Sigmoid colon (tissue), 7 donors: ENCODE measurements at regions of chr19 and their contacts with region 1.

Region 1: DNA sequence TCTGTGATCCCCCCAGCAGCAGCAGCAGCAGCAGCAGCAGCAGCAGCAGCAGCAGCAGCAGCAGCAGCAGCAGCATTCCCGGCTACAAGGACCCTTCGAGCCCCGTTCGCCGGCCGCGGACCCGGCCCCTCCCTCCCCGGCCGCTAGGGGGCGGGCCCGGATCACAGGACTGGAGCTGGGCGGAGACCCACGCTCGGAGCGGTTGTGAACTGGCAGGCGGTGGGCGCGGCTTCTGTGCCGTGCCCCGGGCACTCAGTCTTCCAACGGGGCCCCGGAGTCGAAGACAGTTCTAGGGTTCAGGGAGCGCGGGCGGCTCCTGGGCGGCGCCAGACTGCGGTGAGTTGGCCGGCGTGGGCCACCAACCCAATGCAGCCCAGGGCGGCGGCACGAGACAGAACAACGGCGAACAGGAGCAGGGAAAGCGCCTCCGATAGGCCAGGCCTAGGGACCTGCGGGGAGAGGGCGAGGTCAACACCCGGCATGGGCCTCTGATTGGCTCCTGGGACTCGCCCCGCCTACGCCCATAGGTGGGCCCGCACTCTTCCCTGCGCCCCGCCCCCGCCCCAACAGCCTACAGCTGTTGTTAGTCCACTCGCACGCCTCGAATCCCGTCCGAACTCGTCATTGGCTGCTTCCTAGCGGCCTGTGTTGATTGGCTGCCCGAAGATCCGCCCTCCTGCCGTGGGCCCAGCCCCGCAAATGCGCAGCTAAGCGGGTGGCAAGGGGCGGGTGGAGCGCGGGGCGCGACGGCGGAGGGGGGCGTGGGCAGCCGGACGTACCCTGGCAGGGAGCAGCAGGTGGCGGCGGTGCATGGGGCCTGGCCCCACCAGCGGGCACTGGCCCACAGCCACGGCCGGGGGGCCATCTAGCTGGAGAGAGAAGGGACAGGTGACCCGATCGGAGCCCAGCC is 1.4 kb upstream of the SIX5 start:
- DNase-seq: peak; percentile 99
- H3K4me3 ChIP-seq: peak overlapping the region; percentile 47 to 93 (median 84)
- H3K27ac ChIP-seq: peak overlapping the region; percentile 89 to 99 (median 98)
- H3K4me1 ChIP-seq: peaks cover 3 to 47% (median 33%) of the 10 kb centered on the region in 4 donors
- H3K27me3 ChIP-seq: no peaks in the 10 kb centered on the region
- CTCF ChIP-seq: peak; percentile 85 to 94 (median 94)
- EP300 ChIP-seq: no peak
- POLR2A ChIP-seq: peak; percentile 27 to 43

Region 2: GRCh38 chr19:45638930-45639729 is 131.3 kb before region 1 on chr19 and contains the start of gene EML2:
- intact Hi-C with region 1: no loop called
- DNase-seq: no peak
- H3K4me3 ChIP-seq: peak within 1 kb of the TSS; percentile 55 to 71 (median 60)
- H3K27ac ChIP-seq: peak within 1 kb of the TSS in 1 of 4 donors; percentile 30
- H3K4me1 ChIP-seq: peaks cover 0 to 46% (median 30%) of the 10 kb centered on the region in 4 donors
- H3K27me3 ChIP-seq: peaks cover 6 to 11% (median 7%) of the 10 kb centered on the region in 3 donors
- CTCF ChIP-seq: no peak
- EP300 ChIP-seq: no peak
- POLR2A ChIP-seq: no peak
- total RNA-seq, gene EML2: 10.4 to 34.6 (median 14.7) TPM

Region 3: GRCh38 chr19:45717166-45717982 is 53.1 kb before region 1 on chr19:
- intact Hi-C with region 1: loop called (anchors 2 kb)
- DNase-seq: peak; percentile 100
- H3K4me3 ChIP-seq: peak overlapping the region; percentile 60 to 82 (median 69)
- H3K27ac ChIP-seq: peak overlapping the region; percentile 87 to 95 (median 88)
- H3K4me1 ChIP-seq: peaks cover 0 to 19% (median 17%) of the 10 kb centered on the region in 4 donors
- H3K27me3 ChIP-seq: no peaks in the 10 kb centered on the region
- CTCF ChIP-seq: peak in 1 of 4 experiments; percentile 29
- EP300 ChIP-seq: peak in 1 of 4 donors; percentile 79
- POLR2A ChIP-seq: peak; percentile 32 to 37

Region 4: DNA sequence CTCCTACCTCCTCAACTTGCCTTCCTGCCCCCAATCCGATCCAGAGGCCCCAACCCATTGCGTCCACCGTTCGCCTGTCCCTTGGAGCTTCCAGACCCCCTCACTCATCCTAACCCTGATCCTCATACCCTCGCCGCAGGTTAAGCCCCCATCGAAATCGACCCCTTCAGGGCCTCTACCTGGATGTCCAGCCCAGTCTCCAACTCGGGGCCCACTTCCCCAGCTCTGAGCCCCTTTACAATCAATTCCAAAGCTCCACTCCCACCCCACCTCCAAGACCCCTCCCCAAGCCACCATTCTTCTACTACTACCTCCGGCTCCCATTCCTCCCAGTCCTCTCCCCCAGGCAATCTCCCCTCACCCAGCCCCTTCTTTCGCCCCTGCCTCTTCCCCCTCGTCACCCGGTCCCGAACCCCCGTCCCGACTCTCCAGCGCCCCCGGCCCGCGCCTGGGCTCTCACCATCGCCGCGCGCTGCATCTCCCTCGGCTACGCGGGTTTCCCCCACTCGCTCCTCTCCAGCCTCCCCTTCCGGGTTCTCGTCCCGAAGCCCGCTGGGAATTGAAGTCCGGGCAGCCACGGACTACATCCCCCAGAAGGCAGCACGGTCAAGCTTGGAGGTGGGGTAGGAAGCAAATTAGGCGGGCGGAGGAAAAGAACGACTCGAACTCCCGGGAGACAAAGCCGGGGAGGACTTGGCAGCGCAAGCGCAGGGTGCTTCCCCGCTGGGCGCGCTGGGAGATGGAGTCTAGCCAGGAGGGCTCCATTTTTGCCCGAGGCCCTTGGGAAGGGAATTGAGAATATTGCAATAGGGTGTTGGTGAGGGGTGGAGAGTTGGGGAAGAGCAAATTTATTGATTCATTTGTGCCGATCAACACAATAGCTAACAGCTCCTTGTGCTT is 39.8 kb before region 1 on chr19 and contains the start of gene FBXO46:
- intact Hi-C with region 1: loop called (anchors 2 kb)
- DNase-seq: peak; percentile 99
- H3K4me3 ChIP-seq: peak within 1 kb of the TSS; percentile 87 to 91 (median 88)
- H3K27ac ChIP-seq: peak within 1 kb of the TSS; percentile 76 to 87 (median 84)
- H3K4me1 ChIP-seq: peaks cover 0 to 25% (median 20%) of the 10 kb centered on the region in 4 donors
- H3K27me3 ChIP-seq: no peaks in the 10 kb centered on the region
- CTCF ChIP-seq: no peak
- EP300 ChIP-seq: peak in 1 of 4 donors; percentile 51
- POLR2A ChIP-seq: peak; percentile 75 to 86
- total RNA-seq, gene FBXO46: 7.1 to 9.7 (median 8.8) TPM

Region 5: GRCh38 chr19:45742969-45743368 is 27.5 kb before region 1 on chr19:
- intact Hi-C with region 1: no loop called
- DNase-seq: no peak
- H3K4me3 ChIP-seq: no peak overlapping the region
- H3K27ac ChIP-seq: peak overlapping the region in 1 of 4 donors; percentile 11
- H3K4me1 ChIP-seq: no peaks in the 10 kb centered on the region
- H3K27me3 ChIP-seq: no peaks in the 10 kb centered on the region
- CTCF ChIP-seq: no peak
- EP300 ChIP-seq: no peak
- POLR2A ChIP-seq: no peak

Region 6: DNA sequence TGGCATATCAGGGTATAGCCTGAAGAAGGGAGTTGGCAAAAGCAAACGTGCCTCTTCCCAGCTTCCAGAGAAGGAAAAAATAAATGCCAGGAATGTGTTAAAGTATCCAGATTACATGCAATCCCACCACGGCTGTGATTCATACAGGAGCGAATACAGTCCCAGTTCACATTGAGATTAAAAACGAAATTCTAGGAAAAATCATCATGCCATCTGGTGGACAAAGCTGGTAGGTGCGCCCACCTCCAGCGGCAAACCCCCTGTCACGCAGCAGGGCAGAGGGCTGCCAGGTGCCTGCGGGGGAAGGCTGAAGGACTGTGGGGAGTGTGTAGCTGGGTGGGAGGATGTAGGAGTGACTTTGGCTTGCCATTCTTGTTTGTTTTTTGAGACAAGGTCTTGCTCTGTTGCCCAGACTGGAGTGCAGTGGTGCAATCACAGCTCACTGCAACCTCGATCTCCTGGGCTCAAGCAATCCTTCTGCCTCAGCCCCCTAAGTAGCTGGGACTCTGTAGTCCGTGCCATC is 28.6 kb after region 1 on chr19:
- intact Hi-C with region 1: loop called (anchors 1 kb)
- DNase-seq: no peak
- H3K4me3 ChIP-seq: no peak overlapping the region
- H3K27ac ChIP-seq: no peak overlapping the region
- H3K4me1 ChIP-seq: peaks cover 0 to 8% (median 6%) of the 10 kb centered on the region in 4 donors
- H3K27me3 ChIP-seq: no peaks in the 10 kb centered on the region
- CTCF ChIP-seq: peak; percentile 89 to 94 (median 92)
- EP300 ChIP-seq: no peak
- POLR2A ChIP-seq: no peak

Region 7: GRCh38 chr19:45824041-45824471 is 53.6 kb after region 1 on chr19:
- intact Hi-C with region 1: no loop called
- DNase-seq: no peak
- H3K4me3 ChIP-seq: no peak overlapping the region
- H3K27ac ChIP-seq: peak overlapping the region in 1 of 4 donors; percentile 18
- H3K4me1 ChIP-seq: peaks cover 0 to 8% (median 0%) of the 10 kb centered on the region in 4 donors
- H3K27me3 ChIP-seq: no peaks in the 10 kb centered on the region
- CTCF ChIP-seq: no peak
- EP300 ChIP-seq: no peak
- POLR2A ChIP-seq: no peak